ENCODE measurements at regions of chr14 and their contacts with region 1.

Region 1: GRCh38 chr14:60248697-60249318 is at the start of gene PPM1A:
- DNase-seq: peak; percentile 89
- ATAC-seq: peak; percentile 68
- H3K4me3 Mint-ChIP-seq: peak within 1 kb of the TSS; percentile 99
- H3K27ac Mint-ChIP-seq: peak within 1 kb of the TSS; percentile 100
- H3K4me1 Mint-ChIP-seq: peaks cover 52% of the 10 kb centered on the region
- H3K27me3 Mint-ChIP-seq: peaks cover 2% of the 10 kb centered on the region
- CTCF ChIP-seq: no peak
- total RNA-seq, gene PPM1A: 40.1 and 47.5 TPM in 2 replicates

Region 2: DNA sequence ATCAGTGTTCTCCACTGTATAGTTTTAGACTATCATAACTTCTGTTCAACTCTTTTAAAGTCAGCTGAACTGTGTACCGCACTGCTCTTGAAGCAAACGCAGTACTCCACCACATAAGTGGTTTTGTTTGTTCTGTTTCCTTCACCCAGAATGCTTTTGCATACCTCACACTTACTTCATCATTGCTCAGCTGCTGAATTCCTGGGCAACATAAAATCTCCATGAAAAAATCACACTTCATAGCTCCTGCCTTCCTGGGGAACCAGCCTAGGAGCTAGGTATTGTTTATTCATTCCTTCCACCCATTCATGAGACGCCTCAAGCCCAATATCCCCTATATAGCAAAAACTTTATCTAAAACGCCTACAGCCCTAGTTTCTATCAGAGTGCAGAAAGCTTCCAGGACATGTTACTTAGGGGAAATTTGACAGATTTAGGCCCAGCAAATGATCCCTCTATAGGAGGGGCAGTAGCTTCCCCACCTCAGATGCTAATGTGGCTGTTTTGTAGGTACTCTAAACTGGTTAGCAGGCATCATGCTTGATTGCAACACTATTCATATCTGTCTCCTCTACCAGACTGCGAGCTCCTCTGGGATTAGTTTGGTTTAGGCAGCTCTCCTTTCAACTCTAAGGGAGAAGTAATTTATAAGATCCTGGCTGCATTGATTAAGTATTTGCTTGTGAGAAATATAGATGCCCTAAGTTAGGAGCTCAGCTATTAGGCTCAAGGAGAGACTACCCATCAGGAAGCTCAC is 284.4 kb before region 1 on chr14:
- CTCF ChIA-PET with region 1: interaction called, 4 read pairs
- POLR2A ChIA-PET with region 1: interaction called, 18 read pairs
- intact Hi-C with region 1: loop called (anchors 1 kb)
- DNase-seq: no peak
- ATAC-seq: peak; percentile 25
- H3K4me3 Mint-ChIP-seq: peak overlapping the region; percentile 86
- H3K27ac Mint-ChIP-seq: peak overlapping the region; percentile 93
- H3K4me1 Mint-ChIP-seq: peaks cover 14% of the 10 kb centered on the region
- H3K27me3 Mint-ChIP-seq: no peaks in the 10 kb centered on the region
- CTCF ChIP-seq: no peak

Region 3: DNA sequence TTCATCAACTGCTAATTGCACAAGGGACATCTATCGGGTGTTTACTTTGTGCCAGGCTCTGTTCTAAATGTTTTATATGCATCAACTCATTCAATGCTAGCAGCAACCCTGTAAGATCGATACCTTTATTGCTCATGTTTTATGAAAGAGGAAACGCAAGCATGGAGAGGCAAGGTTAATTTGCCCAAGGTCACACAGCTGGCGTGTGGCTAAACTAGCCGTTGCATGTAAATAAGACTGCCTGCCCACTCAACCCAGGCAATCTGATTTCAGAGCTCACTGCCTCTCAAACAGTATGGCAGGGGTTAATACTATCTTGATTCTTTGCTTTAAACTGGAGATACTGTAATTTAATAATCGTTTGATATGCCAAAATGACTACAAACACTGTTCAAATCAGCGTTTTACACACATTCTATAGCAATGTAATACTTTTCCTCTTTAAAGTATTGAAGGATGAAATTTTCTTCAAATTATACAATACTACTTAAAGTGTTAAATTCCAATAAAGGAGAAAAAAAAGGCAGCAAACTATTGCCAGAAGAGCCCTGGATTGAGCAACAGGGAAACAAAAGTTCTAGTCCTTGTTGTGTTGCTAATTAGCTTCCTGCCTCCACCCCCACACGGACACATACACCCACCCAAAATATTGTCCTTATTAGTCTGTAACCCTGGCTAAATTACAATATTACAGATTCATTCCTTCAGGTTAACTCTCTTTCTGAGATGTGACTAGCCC is 44.5 kb before region 1 on chr14:
- CTCF ChIA-PET with region 1: no interaction called
- POLR2A ChIA-PET with region 1: interaction called, 12 read pairs
- intact Hi-C with region 1: no loop called
- DNase-seq: no peak
- ATAC-seq: peak; percentile 42
- H3K4me3 Mint-ChIP-seq: peak overlapping the region; percentile 16
- H3K27ac Mint-ChIP-seq: no peak overlapping the region
- H3K4me1 Mint-ChIP-seq: peaks cover 22% of the 10 kb centered on the region
- H3K27me3 Mint-ChIP-seq: peaks cover 12% of the 10 kb centered on the region
- CTCF ChIP-seq: no peak

Region 4: GRCh38 chr14:60288279-60288678 is 39.5 kb after region 1 on chr14:
- CTCF ChIA-PET with region 1: no interaction called
- POLR2A ChIA-PET with region 1: no interaction called
- intact Hi-C with region 1: loop called (anchors 5 kb)
- DNase-seq: no peak
- ATAC-seq: no peak
- H3K4me3 Mint-ChIP-seq: no peak overlapping the region
- H3K27ac Mint-ChIP-seq: no peak overlapping the region
- H3K4me1 Mint-ChIP-seq: no peaks in the 10 kb centered on the region
- H3K27me3 Mint-ChIP-seq: no peaks in the 10 kb centered on the region
- CTCF ChIP-seq: no peak

Region 5: GRCh38 chr14:60980811-60981632 is 732.2 kb after region 1 on chr14 and contains the starts of genes SLC38A6 and TRMT5:
- CTCF ChIA-PET with region 1: no interaction called
- POLR2A ChIA-PET with region 1: interaction called, 3 read pairs
- intact Hi-C with region 1: loop called (anchors 2 kb)
- DNase-seq: peak; percentile 88
- ATAC-seq: peak; percentile 83
- H3K4me3 Mint-ChIP-seq: no peak within 1 kb of the TSS
- H3K27ac Mint-ChIP-seq: no peak within 1 kb of the TSS
- H3K4me1 Mint-ChIP-seq: peaks cover 17% of the 10 kb centered on the region
- H3K27me3 Mint-ChIP-seq: no peaks in the 10 kb centered on the region
- CTCF ChIP-seq: no peak
- total RNA-seq, gene SLC38A6: 10.4 and 10.8 TPM in 2 replicates
- total RNA-seq, gene TRMT5: 11.5 and 13.2 TPM in 2 replicates

Measured in activated B cell treated with CpG ODN at 0.5 μM for 24 hours (primary cell).